ENCODE measurements at regions of chr15 and their contacts with region 1.

Region 1: DNA sequence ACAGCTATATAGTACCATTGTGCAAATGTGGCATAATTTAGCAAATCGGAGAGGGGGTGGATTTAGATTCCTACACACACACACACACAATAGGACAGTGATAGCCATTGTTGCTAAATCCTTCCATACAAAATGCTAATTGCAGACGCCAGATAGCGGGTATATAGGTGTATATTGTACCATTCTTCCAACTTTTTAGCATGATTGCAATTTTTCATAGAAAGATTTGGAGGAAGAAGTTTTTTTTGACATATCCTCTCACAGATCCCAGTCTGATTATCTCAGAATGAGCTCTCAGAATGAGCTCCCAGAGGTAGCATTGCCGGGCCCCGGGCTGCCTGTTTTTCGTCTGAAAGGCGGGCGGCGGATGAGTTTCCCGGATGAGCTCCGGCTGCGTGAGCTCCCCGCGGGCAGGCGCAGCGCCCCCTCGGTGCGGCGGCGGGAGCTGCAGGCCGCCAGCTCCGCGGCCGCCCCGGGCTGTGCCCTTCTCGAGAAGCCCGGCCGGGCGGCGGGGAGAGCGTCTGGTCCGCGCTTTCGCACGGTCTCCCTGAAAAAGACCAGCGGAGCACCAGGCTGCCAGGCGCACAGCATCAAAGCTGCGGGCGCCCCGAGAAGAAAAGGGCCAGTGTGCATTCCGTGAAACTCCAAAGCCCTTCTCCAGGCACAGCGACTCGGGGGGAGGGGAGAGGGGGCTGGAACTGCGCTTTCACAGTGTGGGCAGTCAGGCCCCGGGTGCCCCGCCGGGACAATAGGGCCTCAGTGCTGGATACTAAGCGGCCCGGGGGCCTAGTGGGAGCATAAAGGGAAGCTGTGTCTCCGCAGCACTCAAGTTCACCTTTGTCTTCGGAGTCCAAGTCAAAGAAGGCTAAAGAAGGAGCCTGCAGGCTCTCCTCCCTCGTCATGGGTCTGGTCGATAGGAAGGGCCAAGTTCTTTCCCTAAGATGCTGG is 12.0 kb upstream of the SHC4 start:
- DNase-seq: peak; percentile 64 to 90
- H3K4me3 ChIP-seq: peak overlapping the region; percentile 35 to 61 (median 55)
- H3K27ac ChIP-seq: no peak overlapping the region
- H3K4me1 ChIP-seq: peaks cover 5 to 18% (median 8%) of the 10 kb centered on the region in 4 experiments
- H3K27me3 ChIP-seq: peaks cover 0 to 4% (median 0%) of the 10 kb centered on the region in 4 experiments; a peak in 1 of 7 replicates
- CTCF ChIP-seq: peak; percentile 80 to 83 (median 83)
- EP300 ChIP-seq: no peak
- POLR2A ChIP-seq: no peak
- RAD21 ChIP-seq: peak; percentile 37 to 71

Region 2: DNA sequence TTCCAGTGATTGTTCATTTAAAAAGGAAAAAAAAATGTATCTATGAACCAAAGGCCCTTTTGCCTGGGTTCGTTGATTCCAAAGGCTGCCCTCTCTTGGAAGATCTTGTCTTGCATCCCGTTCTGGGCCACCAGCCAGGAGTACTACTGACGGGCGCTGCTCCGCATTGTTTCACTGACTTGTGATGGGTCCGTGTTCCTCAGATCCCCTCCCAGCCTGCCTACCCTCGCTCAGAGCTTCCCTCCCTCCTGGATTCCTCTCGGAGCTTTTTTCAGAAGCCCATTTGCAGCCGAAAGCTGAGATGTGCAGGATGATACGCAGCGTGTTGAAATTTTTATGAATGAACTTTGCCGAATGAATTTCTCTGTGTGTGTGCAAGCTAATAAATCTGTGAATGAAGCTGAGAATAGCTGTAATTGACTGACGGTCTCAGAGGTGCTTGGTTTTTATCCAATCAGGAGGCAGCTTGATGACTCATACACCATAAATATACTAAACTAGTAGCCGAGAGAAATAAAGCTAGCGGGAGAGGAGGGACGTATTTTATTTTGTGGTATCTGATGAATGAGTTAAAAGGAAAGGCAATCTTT is 12.1 kb before region 1 on chr15 and contains the start of gene SHC4:
- CTCF ChIA-PET with region 1: no interaction called
- POLR2A ChIA-PET with region 1: interaction called, 11 read pairs
- DNase-seq: no peak
- H3K4me3 ChIP-seq: peak within 1 kb of the TSS; percentile 50 to 79 (median 72)
- H3K27ac ChIP-seq: no peak within 1 kb of the TSS
- H3K4me1 ChIP-seq: peaks cover 0 to 12% (median 1%) of the 10 kb centered on the region in 4 experiments; a peak in 4 of 7 replicates
- H3K27me3 ChIP-seq: peaks cover 8 to 20% (median 17%) of the 10 kb centered on the region in 4 experiments
- CTCF ChIP-seq: no peak
- EP300 ChIP-seq: no peak
- POLR2A ChIP-seq: no peak
- RAD21 ChIP-seq: no peak
- total RNA-seq, gene SHC4: 0.30 and 0.54 TPM in 2 replicates

Region 3: GRCh38 chr15:49110158-49110944 is 134.6 kb after region 1 on chr15:
- CTCF ChIA-PET with region 1: no interaction called
- POLR2A ChIA-PET with region 1: no interaction called
- DNase-seq: peak; percentile 2 to 53
- H3K4me3 ChIP-seq: no peak overlapping the region
- H3K27ac ChIP-seq: no peak overlapping the region
- H3K4me1 ChIP-seq: peaks cover 0 to 7% (median 2%) of the 10 kb centered on the region in 4 experiments; a peak in 5 of 7 replicates
- H3K27me3 ChIP-seq: no peaks in the 10 kb centered on the region
- CTCF ChIP-seq: no peak
- EP300 ChIP-seq: no peak
- POLR2A ChIP-seq: no peak
- RAD21 ChIP-seq: no peak